ENCODE measurements at regions of chr7 and their contacts with region 1.

Region 1: GRCh38 chr7:149838224-149838947 is at the start of gene ZNF862:
- DNase-seq: peak; percentile 99
- H3K4me3 ChIP-seq: peak within 1 kb of the TSS; percentile 79
- H3K27ac ChIP-seq: peak within 1 kb of the TSS; percentile 77
- H3K4me1 ChIP-seq: peaks cover 7% of the 10 kb centered on the region
- H3K27me3 ChIP-seq: no peaks in the 10 kb centered on the region
- CTCF ChIP-seq: no peak
- total RNA-seq, gene ZNF862: 5.7 and 8.3 TPM in 2 replicates

Region 2: GRCh38 chr7:149050941-149051340 is 787.4 kb before region 1 on chr7:
- CTCF ChIA-PET with region 1: no interaction called
- POLR2A ChIA-PET with region 1: interaction called, 18 read pairs
- intact Hi-C with region 1: no loop called
- DNase-seq: no peak
- H3K4me3 ChIP-seq: no peak overlapping the region
- H3K27ac ChIP-seq: no peak overlapping the region
- H3K4me1 ChIP-seq: no peaks in the 10 kb centered on the region
- H3K27me3 ChIP-seq: no peaks in the 10 kb centered on the region
- CTCF ChIP-seq: no peak

Region 3: GRCh38 chr7:149854611-149855360 is 16.4 kb after region 1 on chr7:
- CTCF ChIA-PET with region 1: no interaction called
- POLR2A ChIA-PET with region 1: no interaction called
- intact Hi-C with region 1: loop called (anchors 2 kb)
- DNase-seq: peak; percentile 87
- H3K4me3 ChIP-seq: no peak overlapping the region
- H3K27ac ChIP-seq: peak overlapping the region; percentile 70
- H3K4me1 ChIP-seq: peaks cover 21% of the 10 kb centered on the region
- H3K27me3 ChIP-seq: no peaks in the 10 kb centered on the region
- CTCF ChIP-seq: no peak

Region 4: GRCh38 chr7:150404805-150405583 is 566.6 kb after region 1 on chr7:
- CTCF ChIA-PET with region 1: no interaction called
- POLR2A ChIA-PET with region 1: no interaction called
- intact Hi-C with region 1: no loop called
- DNase-seq: peak; percentile 87
- H3K4me3 ChIP-seq: peak overlapping the region; percentile 69
- H3K27ac ChIP-seq: peak overlapping the region; percentile 79
- H3K4me1 ChIP-seq: peaks cover 17% of the 10 kb centered on the region
- H3K27me3 ChIP-seq: no peaks in the 10 kb centered on the region
- CTCF ChIP-seq: peak; percentile 34; the same call in 1 of the 2 replicates

Measured in A673 (cell line).